Right ventricle myocardium superior (tissue), 1 donor: ENCODE measurements at regions of chr17 and their contacts with region 1.

Region 1: GRCh38 chr17:79711715-79712305 is 18.9 kb upstream of the ENPP7 start:
- DNase-seq: no peak
- ATAC-seq: no peak

Region 2: GRCh38 chr17:79400989-79401703 is 310.7 kb before region 1 on chr17:
- intact Hi-C with region 1: loop called (anchors 5 kb)
- DNase-seq: peak; percentile 75
- ATAC-seq: peak; percentile 90

Region 3: DNA sequence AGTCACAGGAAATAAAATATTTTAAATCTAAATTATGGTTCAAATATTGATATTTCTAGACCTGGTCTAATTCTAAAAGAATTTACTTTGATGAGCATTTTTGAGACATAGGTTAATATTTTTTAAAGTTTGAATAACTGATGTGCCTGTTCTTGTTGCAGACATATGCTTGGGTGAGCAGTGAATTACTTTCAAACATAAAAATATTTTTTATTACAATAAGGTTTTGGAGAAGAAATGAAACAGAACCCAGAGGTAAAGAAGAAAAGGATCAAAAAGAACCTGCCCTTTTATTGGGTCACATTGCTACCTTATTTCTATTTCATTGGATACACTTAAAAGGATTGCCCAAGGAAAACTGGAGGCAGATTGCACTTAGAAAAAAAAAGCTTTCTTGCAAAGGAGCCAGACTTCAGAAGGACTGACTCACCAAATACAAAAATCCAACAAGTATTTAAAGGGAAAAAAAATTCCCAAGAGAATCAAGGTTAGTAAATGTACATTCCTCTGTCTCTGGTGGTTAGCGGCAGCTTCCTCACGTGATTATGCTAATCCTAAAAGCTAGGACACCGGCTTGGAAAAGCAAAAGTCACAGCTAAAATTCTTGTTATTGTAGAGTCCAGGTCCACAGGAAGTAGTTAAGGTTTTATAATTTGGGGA is 37.5 kb after region 1 on chr17:
- intact Hi-C with region 1: no loop called
- DNase-seq: no peak
- ATAC-seq: no peak